MCF 10A (cell line): ENCODE measurements at regions of chr20 and their contacts with region 1.

Region 1: DNA sequence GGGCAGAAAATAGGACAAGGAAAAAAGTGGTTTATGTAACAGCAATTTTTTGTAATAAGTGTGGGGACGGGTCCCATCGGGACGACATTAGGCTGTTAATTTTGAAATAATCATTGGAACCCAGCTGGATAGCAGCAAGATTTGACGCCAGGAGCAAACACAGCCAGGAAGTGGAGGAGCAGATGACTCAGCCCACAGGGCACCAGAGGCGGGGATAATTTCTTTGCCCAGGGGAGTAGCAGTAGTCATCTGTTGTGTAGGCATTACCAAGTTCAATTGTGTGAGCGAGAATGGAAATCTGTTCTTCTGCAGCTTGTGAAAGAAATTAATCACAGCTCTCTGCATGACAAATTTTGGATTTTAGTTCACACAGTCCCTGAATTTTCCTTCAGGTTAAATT is 22.6 kb upstream of the RIN2 start:
- DNase-seq: peak; percentile 96
- H3K4me3 Mint-ChIP-seq: peak overlapping the region; percentile 27
- H3K27ac Mint-ChIP-seq: peak overlapping the region; percentile 87
- H3K4me1 Mint-ChIP-seq: peaks cover 25% of the 10 kb centered on the region
- H3K27me3 Mint-ChIP-seq: no peaks in the 10 kb centered on the region
- CTCF ChIP-seq: no peak

Region 2: GRCh38 chr20:19661717-19662636 is 73.5 kb before region 1 on chr20:
- CTCF ChIA-PET with region 1: no interaction called
- POLR2A ChIA-PET with region 1: no interaction called
- intact Hi-C with region 1: no loop called
- DNase-seq: peak; percentile 73
- H3K4me3 Mint-ChIP-seq: no peak overlapping the region
- H3K27ac Mint-ChIP-seq: no peak overlapping the region
- H3K4me1 Mint-ChIP-seq: no peaks in the 10 kb centered on the region
- H3K27me3 Mint-ChIP-seq: peaks cover 59% of the 10 kb centered on the region
- CTCF ChIP-seq: peak; percentile 99

Region 3: DNA sequence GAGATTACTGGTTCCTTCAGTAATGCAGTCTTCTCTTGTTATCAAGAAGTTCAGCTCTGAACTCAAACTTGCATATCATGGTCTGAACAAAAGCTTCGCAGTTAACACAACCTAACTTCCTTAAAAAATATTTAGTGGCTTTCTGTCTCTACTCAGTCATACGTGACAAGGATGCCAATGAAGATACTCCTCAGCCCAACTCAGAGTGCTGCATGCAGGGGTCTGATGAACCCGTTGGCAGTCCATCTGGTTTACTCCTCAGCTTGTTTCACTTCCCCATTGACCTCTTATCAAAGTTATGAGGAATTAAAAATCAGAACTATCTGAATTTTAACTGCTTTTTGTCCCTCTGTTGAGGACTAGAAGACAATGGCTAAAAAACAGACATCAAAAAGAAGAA is 34.0 kb before region 1 on chr20:
- CTCF ChIA-PET with region 1: interaction called, 14 read pairs
- POLR2A ChIA-PET with region 1: interaction called, 20 read pairs
- intact Hi-C with region 1: no loop called
- DNase-seq: no peak
- H3K4me3 Mint-ChIP-seq: no peak overlapping the region
- H3K27ac Mint-ChIP-seq: no peak overlapping the region
- H3K4me1 Mint-ChIP-seq: peaks cover 19% of the 10 kb centered on the region
- H3K27me3 Mint-ChIP-seq: peaks cover 7% of the 10 kb centered on the region
- CTCF ChIP-seq: no peak

Region 4: GRCh38 chr20:19750907-19751606 is 15.6 kb after region 1 on chr20:
- CTCF ChIA-PET with region 1: interaction called, 6 read pairs
- POLR2A ChIA-PET with region 1: interaction called, 23 read pairs
- intact Hi-C with region 1: no loop called
- DNase-seq: no peak
- H3K4me3 Mint-ChIP-seq: no peak overlapping the region
- H3K27ac Mint-ChIP-seq: no peak overlapping the region
- H3K4me1 Mint-ChIP-seq: peaks cover 11% of the 10 kb centered on the region
- H3K27me3 Mint-ChIP-seq: no peaks in the 10 kb centered on the region
- CTCF ChIP-seq: no peak

Region 5: DNA sequence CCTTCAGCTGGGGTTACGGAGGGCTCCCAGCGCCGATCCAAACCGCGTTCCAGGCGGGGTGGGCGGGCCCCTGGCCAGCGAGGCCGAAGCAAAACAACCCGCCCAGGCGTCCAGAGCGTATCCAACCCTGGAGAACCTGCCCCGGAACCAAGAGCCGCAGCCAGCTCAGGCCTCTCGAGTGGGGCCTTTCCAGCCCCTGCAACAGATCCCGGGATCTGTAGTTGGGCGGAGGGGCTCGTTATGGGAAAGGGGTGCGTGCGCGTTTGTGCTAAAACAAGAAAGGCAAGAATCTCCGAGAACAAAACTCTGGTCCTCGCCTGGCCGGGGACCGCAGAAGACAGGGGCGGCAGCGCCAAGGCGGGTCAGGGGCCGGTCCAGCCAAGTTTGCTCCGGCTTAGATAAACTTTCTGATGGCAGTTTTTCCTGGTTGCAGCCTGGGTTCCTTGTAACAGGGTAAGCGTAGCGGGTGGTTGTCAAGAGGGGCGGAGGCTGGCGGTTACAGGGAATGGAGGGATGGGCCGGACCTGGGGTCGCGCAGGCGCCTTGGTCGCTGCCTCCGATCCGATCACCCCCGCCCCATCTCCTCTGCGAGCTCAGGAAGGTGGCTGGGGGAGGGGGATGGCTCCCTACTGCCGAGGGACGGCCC is 22.2 kb after region 1 on chr20:
- CTCF ChIA-PET with region 1: interaction called, 7 read pairs
- POLR2A ChIA-PET with region 1: interaction called, 81 read pairs
- intact Hi-C with region 1: no loop called
- DNase-seq: peak; percentile 68
- H3K4me3 Mint-ChIP-seq: peak overlapping the region; percentile 81
- H3K27ac Mint-ChIP-seq: peak overlapping the region; percentile 70
- H3K4me1 Mint-ChIP-seq: peaks cover 35% of the 10 kb centered on the region
- H3K27me3 Mint-ChIP-seq: no peaks in the 10 kb centered on the region
- CTCF ChIP-seq: no peak